GM23248 (cell line): ENCODE measurements at regions of chr9 and their contacts with region 1.

Region 1: GRCh38 chr9:90107040-90107725 is 502.4 kb downstream of the GADD45G start:
- DNase-seq: peak; percentile 21
- H3K4me3 ChIP-seq: no peak overlapping the region
- H3K27ac ChIP-seq: no peak overlapping the region
- H3K4me1 ChIP-seq: no peaks in the 10 kb centered on the region
- H3K27me3 ChIP-seq: no peaks in the 10 kb centered on the region

Region 2: GRCh38 chr9:88775037-88775471 is 1332.1 kb before region 1 on chr9:
- in situ Hi-C with region 1: no loop called
- DNase-seq: peak; percentile 94
- H3K4me3 ChIP-seq: no peak overlapping the region
- H3K27ac ChIP-seq: peak overlapping the region; percentile 79
- H3K4me1 ChIP-seq: peaks cover 58% of the 10 kb centered on the region
- H3K27me3 ChIP-seq: no peaks in the 10 kb centered on the region

Region 3: GRCh38 chr9:89602978-89603766 is 504.0 kb before region 1 on chr9:
- in situ Hi-C with region 1: loop called (anchors 5 kb)
- DNase-seq: peak; percentile 88
- H3K4me3 ChIP-seq: peak overlapping the region; percentile 63
- H3K27ac ChIP-seq: no peak overlapping the region
- H3K4me1 ChIP-seq: peaks cover 25% of the 10 kb centered on the region; the same call in 1 of the 2 replicates
- H3K27me3 ChIP-seq: peaks cover 10% of the 10 kb centered on the region; the same call in 1 of the 2 replicates